ENCODE measurements at regions of chr7 and their contacts with region 1.

Region 1: GRCh38 chr7:66219805-66220204 is 14.7 kb downstream of the TPST1 start:
- DNase-seq: no peak
- H3K4me3 ChIP-seq: no peak overlapping the region
- H3K27ac ChIP-seq: no peak overlapping the region
- H3K4me1 ChIP-seq: no peaks in the 10 kb centered on the region
- H3K27me3 ChIP-seq: no peaks in the 10 kb centered on the region
- CTCF ChIP-seq: no peak

Region 2: DNA sequence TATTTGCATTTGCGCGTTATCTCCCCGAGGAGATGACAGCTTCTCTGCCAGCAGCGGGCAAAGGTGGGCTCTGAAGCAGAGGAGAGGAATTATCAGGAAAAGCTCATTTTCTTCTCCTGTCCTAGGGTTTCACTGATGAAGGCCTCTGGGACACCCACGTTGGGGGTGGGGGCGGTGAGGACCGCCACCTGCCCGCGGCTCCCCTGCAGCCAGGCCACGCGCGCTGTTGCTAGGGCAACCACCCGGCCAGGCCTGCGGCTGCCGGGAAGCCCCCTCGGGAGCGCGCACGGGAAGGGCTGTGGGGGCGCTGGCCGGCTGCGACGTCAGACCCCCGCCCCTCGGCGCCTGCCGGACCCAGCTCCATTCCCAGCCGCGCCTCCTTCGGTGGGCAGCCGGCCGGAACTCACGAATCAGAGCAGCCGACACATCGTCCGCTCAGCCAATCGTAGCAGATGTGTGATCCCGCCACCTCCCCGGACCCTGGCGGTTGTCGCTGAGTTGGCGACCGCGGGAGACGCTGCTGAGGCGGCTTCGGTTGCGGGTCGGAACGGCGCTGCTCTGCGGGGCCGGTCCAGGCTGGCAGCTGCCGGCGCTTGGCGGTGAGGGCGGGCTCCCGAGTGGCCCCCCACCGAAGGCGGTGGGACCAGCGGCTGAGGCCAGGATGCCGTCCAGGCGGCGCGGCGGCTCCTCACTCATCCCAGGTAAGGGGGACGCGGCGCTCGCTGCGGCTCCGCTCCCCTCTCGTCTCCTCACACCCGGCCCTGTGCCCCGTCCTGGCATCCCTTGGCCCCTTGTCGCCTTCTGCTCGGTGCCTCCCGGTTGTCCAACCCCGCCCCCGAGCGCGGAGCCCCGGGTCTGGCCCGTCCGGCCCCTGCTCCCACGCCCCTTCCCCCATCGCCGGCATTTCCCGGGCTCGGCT is 14.7 kb before region 1 on chr7 and contains the start of gene TPST1:
- CTCF ChIA-PET with region 1: no interaction called
- POLR2A ChIA-PET with region 1: interaction called, 12 read pairs
- intact Hi-C with region 1: no loop called
- DNase-seq: peak; percentile 94
- H3K4me3 ChIP-seq: peak within 1 kb of the TSS; percentile 98
- H3K27ac ChIP-seq: peak within 1 kb of the TSS; percentile 75
- H3K4me1 ChIP-seq: peaks cover 4% of the 10 kb centered on the region
- H3K27me3 ChIP-seq: no peaks in the 10 kb centered on the region
- CTCF ChIP-seq: peak; percentile 63
- total RNA-seq, gene TPST1: 8.0 and 11.0 TPM in 2 replicates

Region 3: GRCh38 chr7:66265566-66265965 is 45.8 kb after region 1 on chr7:
- CTCF ChIA-PET with region 1: no interaction called
- POLR2A ChIA-PET with region 1: no interaction called
- intact Hi-C with region 1: no loop called
- DNase-seq: peak; percentile 21
- H3K4me3 ChIP-seq: no peak overlapping the region
- H3K27ac ChIP-seq: no peak overlapping the region
- H3K4me1 ChIP-seq: no peaks in the 10 kb centered on the region
- H3K27me3 ChIP-seq: no peaks in the 10 kb centered on the region
- CTCF ChIP-seq: no peak